ENCODE measurements at regions of chr17 and their contacts with region 1.

Region 1: DNA sequence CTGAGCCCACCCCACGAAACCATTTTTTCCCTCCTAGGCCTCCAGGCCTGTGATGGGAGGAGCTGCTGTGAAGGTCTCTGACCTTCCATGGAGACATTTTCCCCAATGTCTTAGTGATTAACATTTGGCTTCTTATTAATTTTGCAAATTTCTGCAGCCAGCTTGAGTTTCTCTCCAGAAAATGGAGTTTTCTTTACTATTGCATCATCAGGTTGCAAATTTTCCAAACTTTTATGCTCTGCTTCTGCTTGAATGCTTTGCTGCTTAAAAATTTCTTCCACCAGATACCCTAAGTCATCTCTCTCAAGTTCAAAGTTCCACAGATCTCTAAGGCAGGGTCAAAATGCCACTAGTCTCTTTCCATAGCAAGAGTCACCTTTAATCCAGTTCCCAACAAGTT is 12.9 kb upstream of the MYH4 start:
- DNase-seq: no peak
- ATAC-seq: no peak
- H3K4me3 ChIP-seq: no peak overlapping the region
- H3K27ac ChIP-seq: no peak overlapping the region
- H3K4me1 ChIP-seq: no peaks in the 10 kb centered on the region
- H3K27me3 ChIP-seq: peaks cover 7% of the 10 kb centered on the region; the same call in 1 of the 2 replicates
- CTCF ChIP-seq: no peak
- POLR2A ChIP-seq: no peak
- RAD21 ChIP-seq: no peak

Region 2: GRCh38 chr17:9982159-9982558 is 500.1 kb before region 1 on chr17:
- CTCF ChIA-PET with region 1: no interaction called
- POLR2A ChIA-PET with region 1: no interaction called
- RAD21 ChIA-PET with region 1: no interaction called
- intact Hi-C with region 1: no loop called
- DNase-seq: peak; percentile 27
- ATAC-seq: peak; percentile 88
- H3K4me3 ChIP-seq: no peak overlapping the region
- H3K27ac ChIP-seq: no peak overlapping the region
- H3K4me1 ChIP-seq: no peaks in the 10 kb centered on the region
- H3K27me3 ChIP-seq: no peaks in the 10 kb centered on the region
- CTCF ChIP-seq: peak; percentile 43 to 60 (median 52); a peak in 5 of 6 replicates
- POLR2A ChIP-seq: no peak
- RAD21 ChIP-seq: peak; percentile 50

Region 3: GRCh38 chr17:10499950-10500349 is 17.7 kb after region 1 on chr17:
- CTCF ChIA-PET with region 1: no interaction called
- POLR2A ChIA-PET with region 1: no interaction called
- RAD21 ChIA-PET with region 1: no interaction called
- intact Hi-C with region 1: no loop called
- DNase-seq: no peak
- ATAC-seq: no peak
- H3K4me3 ChIP-seq: no peak overlapping the region
- H3K27ac ChIP-seq: no peak overlapping the region
- H3K4me1 ChIP-seq: no peaks in the 10 kb centered on the region
- H3K27me3 ChIP-seq: peaks cover 51% of the 10 kb centered on the region
- CTCF ChIP-seq: no peak
- POLR2A ChIP-seq: no peak
- RAD21 ChIP-seq: no peak

Region 4: DNA sequence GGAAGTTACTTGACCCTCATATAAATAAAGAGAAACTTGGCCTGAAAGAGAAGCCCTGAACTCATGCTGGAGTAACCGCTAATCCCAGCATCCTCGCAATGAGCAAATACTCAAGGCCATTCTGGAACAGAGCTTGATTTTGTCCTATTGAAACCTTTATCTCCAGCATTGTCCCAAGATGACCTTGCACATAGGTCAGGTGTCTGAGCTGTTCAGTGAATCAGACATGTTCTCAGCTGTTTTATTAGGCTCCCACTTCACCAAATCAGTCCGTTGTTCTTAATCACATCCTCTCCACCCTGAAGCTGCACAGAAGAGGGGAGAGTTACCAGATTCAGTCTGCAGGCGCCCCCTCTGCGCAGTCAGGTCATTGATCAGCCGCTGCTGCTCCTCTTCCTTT is 45.2 kb after region 1 on chr17:
- CTCF ChIA-PET with region 1: no interaction called
- POLR2A ChIA-PET with region 1: no interaction called
- RAD21 ChIA-PET with region 1: no interaction called
- intact Hi-C with region 1: loop called (anchors 5 kb)
- DNase-seq: no peak
- ATAC-seq: no peak
- H3K4me3 ChIP-seq: no peak overlapping the region
- H3K27ac ChIP-seq: no peak overlapping the region
- H3K4me1 ChIP-seq: no peaks in the 10 kb centered on the region
- H3K27me3 ChIP-seq: peaks cover 4% of the 10 kb centered on the region
- CTCF ChIP-seq: no peak
- POLR2A ChIP-seq: no peak
- RAD21 ChIP-seq: no peak